Cardiac septum (tissue), 1 donor: ENCODE measurements at regions of chr10 and their contacts with region 1.

Region 1: DNA sequence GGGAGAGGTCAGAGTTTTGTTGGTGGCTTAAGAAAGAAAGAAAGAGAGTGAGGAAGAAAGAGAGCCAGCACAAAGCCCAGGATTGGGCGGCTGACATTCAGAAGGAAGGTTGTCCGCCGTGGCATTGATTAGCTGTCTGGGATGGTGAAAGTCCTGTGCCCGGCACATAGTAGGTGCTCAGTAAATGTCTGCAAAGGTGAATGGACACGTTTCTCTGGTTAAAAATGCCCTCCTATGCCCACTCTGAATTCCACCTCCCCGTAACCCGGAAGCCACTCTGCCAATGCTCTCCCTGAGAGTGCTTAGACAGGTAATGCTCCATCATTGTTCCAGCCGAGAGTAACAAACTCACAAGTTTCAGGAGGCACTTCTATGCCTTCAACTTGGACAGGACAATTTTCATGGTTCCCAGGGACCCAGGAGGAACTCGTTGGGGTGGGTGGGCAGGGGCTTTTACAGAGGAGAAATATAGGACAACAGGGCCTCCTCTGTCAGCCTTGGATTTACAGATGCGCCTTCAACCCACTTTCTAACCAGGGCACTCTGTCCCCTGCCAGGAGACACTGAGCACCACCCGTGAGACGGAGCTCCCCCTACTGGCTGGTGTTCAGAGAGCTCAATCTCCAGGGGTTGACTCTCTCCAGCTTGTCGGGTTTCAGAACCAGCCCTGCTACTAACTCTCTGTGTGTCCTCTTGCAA is 411.5 kb upstream of the ZMIZ1 start:
- DNase-seq: peak; percentile 81

Region 2: DNA sequence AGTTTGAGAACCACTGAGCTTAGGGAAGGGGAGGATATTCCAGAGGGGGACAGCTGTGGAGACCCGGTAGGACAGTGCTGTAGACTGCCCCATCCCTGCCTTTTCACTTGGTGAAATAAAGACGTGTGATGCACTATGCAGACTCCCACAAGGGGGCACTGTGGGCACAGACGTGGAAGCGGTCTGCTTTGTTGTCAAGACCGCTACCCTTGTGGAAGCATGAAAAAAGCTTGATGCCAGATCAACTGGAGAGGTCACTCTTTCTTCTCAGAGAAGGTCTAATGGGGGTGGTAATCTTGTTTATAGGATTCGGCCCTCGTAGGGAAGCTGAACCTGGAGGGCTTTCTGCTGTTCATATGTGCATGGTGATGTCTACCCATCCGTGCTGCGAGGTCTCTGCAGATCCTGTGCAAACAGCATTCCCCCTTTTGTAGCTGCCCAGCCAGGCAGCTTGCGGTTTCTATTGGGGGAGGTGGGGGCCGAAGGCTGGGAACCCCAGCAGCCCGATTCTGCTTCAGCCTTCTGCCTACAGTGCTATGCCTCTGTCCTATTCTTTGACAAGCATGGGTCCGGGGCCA is 609.9 kb before region 1 on chr10:
- intact Hi-C with region 1: loop called (anchors 5 kb)
- DNase-seq: peak; percentile 90

Region 3: DNA sequence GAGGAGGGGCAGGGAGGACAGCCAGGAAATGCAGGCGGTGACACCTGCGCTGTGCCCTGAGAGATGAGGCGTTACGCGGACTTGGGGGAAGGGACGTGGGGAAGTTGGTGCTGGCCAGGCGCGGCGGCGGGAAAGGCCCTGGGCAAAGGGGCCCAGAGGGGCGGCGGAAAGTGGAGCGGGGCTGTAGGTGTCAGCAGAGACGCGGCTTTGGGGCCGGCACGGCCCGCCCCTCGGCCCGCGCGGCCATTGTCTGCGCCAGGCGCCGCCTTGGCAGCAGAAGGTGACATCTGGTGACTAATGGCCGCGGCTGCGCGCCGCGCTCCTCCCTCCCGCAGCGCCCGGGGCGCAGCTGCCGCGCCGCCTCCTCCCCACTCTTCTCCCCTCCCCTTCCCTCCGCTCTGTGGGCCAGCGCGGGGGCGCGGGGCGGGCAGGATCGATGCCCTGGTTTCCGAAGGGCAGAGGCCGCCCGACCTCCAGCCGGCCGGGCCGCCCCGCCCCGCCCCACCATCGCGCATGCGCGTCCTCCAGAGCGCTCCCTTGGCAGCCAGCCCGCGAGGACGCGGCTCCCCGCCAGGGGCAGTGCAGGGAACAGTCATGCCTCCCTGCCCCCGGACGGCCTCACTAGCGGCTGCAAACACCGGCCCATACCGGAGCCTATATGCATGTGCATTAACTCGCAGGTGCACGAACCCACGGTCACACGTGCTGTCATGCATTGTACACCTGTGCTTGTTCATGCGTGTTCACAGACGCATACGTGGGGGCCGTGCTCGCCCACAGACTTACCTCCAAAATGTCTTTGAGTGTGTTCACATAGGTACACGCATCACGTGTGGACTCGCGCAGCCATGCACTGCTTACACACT is 354.1 kb before region 1 on chr10:
- intact Hi-C with region 1: loop called (anchors 5 kb)
- DNase-seq: peak; percentile 98

Region 4: GRCh38 chr10:78706256-78706655 is 48.9 kb after region 1 on chr10:
- intact Hi-C with region 1: no loop called
- DNase-seq: no peak